ENCODE measurements at regions of chr5 and their contacts with region 1.

Region 1: GRCh38 chr5:177454397-177455035 is 7.9 kb downstream of the PRR7 start:
- H3K4me3 Mint-ChIP-seq: peak overlapping the region; percentile 76
- H3K27ac Mint-ChIP-seq: no peak overlapping the region
- H3K4me1 Mint-ChIP-seq: peaks cover 23% of the 10 kb centered on the region
- H3K27me3 Mint-ChIP-seq: peaks cover 64% of the 10 kb centered on the region

Region 2: GRCh38 chr5:177162379-177162778 is 292.1 kb before region 1 on chr5:
- intact Hi-C with region 1: no loop called
- H3K4me3 Mint-ChIP-seq: no peak overlapping the region
- H3K27ac Mint-ChIP-seq: peak overlapping the region; percentile 15
- H3K4me1 Mint-ChIP-seq: peaks cover 12% of the 10 kb centered on the region
- H3K27me3 Mint-ChIP-seq: no peaks in the 10 kb centered on the region

Region 3: DNA sequence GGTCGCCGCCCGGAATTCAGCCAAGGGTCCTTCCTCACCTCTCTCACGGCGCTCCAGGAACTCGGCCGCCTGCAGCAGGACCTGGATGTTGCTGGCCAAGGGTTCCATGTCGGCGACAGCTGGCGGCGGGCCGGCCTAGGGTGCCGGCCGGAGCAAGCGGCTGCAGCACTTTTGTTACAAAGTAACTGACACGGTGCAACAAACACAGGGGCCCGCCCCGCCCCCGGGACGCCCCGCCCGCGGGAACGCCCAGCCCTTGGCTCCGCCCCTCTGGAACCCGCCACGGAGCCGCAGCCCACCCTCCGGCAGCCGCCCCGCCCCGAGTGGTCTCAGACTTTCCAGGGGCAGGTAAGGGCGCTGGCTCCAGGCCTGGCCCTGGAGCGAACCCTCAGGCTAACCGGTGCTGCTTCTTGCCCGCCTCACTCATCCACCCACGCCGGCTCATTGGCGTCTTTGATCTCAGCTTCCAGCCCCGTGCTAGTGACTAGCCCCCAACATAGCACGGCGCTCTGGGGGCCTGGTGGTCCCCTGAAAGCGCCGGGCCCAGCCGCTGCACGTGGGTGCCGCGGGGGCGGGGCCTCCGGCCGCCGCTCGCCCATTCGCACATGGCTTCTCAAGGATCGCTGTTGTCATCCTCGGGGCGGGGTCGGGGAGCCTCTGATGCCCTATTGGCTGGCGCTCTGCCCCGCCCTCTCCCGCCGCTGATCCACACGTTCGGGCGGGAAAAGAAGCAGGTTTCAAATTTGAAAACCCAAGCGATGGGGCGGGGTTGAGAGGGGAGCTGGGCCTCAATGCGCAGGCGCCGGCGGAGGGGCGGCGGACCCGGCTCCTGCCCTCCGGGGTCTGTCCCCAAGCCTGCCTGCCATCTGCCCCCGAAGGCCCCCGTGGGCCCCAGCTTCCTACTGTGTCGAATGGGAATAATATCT is 142.5 kb before region 1 on chr5 and contains the start of gene MXD3:
- intact Hi-C with region 1: loop called (anchors 5 kb)
- H3K4me3 Mint-ChIP-seq: peak within 1 kb of the TSS; percentile 81
- H3K27ac Mint-ChIP-seq: peak within 1 kb of the TSS; percentile 63
- H3K4me1 Mint-ChIP-seq: peaks cover 72% of the 10 kb centered on the region
- H3K27me3 Mint-ChIP-seq: peaks cover 2% of the 10 kb centered on the region

Region 4: GRCh38 chr5:177390363-177391300 is 63.9 kb before region 1 on chr5:
- intact Hi-C with region 1: loop called (anchors 1 kb)
- H3K4me3 Mint-ChIP-seq: no peak overlapping the region
- H3K27ac Mint-ChIP-seq: peak overlapping the region; percentile 85
- H3K4me1 Mint-ChIP-seq: peaks cover 54% of the 10 kb centered on the region
- H3K27me3 Mint-ChIP-seq: peaks cover 18% of the 10 kb centered on the region

Region 5: DNA sequence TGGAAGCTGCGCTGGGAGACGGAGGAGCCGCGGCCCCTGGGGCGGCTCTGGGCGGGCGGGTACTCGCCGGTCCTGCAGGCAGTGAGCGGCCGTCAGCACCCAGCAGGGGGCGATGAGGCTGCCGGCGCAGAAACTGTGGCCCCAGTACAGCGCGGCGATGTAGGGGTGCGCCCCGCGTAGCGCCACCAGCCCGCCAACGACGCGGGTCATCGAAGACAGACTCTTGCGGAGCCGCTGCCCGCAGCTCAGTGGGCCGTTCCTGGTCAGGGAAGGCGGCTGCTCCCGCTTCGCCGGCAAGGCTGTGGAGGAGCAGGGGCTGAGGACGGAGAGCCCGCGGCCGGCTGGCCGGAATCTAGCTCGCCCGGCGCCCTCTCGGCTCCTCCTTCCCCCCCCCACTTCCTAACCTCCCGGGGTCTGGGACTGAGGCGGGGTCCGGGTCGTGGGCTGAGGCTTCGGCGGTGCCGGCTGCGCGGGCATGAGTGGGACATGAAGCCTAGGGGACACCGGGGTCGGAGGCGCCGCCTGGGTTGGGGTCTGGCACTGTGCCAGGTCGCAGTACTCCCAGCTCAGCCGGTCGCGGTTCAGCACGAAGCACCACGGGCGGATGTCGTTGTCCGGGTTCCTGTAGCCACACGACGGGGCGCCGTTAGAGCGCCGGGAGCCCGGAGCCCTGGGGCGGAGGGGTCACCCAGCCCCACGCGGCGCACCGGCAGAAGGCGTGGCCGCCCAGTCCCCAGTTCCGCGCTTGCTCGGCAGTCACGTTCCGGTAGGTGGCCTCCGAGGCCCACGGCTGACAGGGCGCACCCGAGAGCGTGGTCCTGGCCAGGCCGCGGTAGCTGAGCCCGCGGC is 50.5 kb before region 1 on chr5:
- intact Hi-C with region 1: loop called (anchors 1 kb)
- H3K4me3 Mint-ChIP-seq: peak overlapping the region; percentile 69
- H3K27ac Mint-ChIP-seq: no peak overlapping the region
- H3K4me1 Mint-ChIP-seq: peaks cover 44% of the 10 kb centered on the region
- H3K27me3 Mint-ChIP-seq: peaks cover 65% of the 10 kb centered on the region

Region 6: DNA sequence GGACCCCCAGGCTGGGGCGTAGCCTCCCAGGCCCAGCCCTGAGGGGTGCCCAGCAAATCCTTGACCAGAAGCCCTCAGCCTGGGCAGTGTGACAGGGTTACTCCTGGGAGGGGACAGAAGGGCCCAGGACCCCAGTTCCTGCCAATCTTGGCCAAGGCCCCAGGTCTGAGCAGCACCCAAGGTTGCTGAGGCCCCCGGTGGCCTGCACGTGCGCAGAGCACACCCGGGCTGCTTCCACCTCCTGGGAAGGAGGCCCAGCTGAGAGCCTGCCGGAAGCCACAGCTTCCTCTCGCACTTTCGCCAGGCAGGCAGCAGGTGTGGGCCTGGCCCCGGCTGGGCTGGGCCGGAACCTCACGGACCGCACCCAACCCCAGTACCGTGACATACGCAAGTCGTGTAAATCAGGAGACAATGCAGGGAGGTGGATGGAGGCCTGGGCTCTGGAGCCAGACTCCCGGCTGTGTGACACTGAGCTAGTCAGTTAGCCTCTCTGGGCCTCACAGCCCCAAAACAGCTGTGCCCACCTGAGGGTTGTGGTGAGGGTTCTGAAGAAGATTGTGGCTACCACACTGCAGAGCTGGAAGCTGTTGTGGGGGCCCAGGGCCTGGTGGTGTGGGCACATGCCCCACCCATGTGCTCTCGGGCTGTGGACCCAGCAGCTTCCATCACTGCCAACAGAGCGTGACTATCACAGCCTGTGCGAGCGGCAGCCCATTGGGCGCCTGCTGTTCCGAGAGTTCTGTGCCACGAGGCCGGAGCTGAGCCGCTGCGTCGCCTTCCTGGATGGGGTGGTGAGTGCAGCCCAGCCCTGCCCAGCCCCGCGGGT is 23.0 kb before region 1 on chr5:
- intact Hi-C with region 1: loop called (anchors 2 kb)
- H3K4me3 Mint-ChIP-seq: peak overlapping the region; percentile 51
- H3K27ac Mint-ChIP-seq: peak overlapping the region; percentile 96
- H3K4me1 Mint-ChIP-seq: peaks cover 69% of the 10 kb centered on the region
- H3K27me3 Mint-ChIP-seq: no peaks in the 10 kb centered on the region

Region 7: DNA sequence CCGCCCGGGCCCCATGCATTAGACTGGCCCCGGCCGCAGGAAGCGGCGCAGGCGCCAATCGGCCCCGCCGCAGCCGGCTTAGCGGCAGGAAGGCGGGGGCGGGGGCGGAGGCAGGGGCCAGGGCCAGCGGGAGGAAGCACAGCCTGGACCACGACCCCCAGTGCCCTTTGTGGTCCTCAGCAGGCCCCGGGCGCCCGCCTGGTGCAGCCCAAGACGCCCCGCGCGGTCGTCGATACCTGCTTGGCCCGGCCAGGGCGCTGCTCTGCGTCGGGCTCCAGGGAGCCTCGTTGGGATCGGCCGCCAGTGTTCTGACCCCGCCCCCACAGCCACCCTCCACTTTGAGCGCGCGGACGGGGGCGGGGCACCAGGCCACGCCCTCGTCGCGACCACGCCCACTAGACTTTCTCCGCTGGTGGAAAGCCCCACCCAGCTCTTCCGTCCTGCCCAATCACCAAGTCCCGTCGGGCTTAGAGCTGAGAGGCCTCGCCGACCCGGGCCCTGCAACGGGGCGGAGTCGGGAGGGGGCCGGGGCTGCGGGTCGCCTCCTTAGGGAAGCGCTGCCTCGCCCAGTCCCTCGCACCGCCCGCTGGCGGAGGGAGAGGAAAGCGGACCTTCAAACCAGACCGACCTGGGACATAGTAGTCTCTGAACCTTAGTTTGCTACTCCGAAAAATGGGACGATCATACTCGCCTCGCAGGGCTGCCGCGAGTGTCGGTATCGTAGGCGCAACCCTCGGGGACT is 42.9 kb after region 1 on chr5 and contains the start of gene PDLIM7:
- intact Hi-C with region 1: loop called (anchors 5 kb)
- H3K4me3 Mint-ChIP-seq: peak within 1 kb of the TSS; percentile 77
- H3K27ac Mint-ChIP-seq: peak within 1 kb of the TSS; percentile 73
- H3K4me1 Mint-ChIP-seq: peaks cover 82% of the 10 kb centered on the region
- H3K27me3 Mint-ChIP-seq: peaks cover 31% of the 10 kb centered on the region

Measured in dendritic cell treated with granulocyte-macrophage colony-stimulating factor and Interleukin-4, amounts not matched to agents 40 ng/mL and 50 ng/mL, for 4 days (primary cell).